ENCODE measurements at regions of chr7 and their contacts with region 1.

Region 1: DNA sequence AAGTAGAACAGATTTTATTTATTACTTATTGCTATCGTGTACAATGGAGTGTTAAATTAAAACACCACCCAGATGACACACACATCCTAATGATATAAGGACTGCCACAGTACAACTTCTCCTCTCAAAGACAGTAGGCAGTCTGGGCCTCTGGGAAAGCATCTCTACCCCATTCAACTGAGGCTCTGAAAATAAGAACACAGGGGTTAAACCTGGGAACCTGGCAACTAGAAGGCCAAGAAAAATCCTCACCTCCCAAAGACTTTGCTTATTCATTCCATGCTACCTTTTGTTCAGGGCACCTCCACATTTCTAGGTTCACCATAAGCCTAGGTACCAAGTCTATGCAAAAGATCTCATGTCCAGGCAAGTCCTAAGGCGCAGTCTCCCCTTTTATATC is 125.4 kb upstream of the FEZF1 start:
- DNase-seq: no peak
- ATAC-seq: no peak
- H3K4me3 ChIP-seq: no peak overlapping the region
- H3K27ac ChIP-seq: no peak overlapping the region
- H3K4me1 ChIP-seq: no peaks in the 10 kb centered on the region
- H3K27me3 ChIP-seq: no peaks in the 10 kb centered on the region
- CTCF ChIP-seq: no peak

Region 2: GRCh38 chr7:122038904-122039303 is 391.0 kb before region 1 on chr7:
- CTCF ChIA-PET with region 1: no interaction called
- POLR2A ChIA-PET with region 1: no interaction called
- in situ Hi-C with region 1: no loop called
- intact Hi-C with region 1: no loop called
- DNase-seq: no peak
- ATAC-seq: no peak
- H3K4me3 ChIP-seq: no peak overlapping the region
- H3K27ac ChIP-seq: no peak overlapping the region
- H3K4me1 ChIP-seq: no peaks in the 10 kb centered on the region
- H3K27me3 ChIP-seq: no peaks in the 10 kb centered on the region
- CTCF ChIP-seq: no peak

Region 3: DNA sequence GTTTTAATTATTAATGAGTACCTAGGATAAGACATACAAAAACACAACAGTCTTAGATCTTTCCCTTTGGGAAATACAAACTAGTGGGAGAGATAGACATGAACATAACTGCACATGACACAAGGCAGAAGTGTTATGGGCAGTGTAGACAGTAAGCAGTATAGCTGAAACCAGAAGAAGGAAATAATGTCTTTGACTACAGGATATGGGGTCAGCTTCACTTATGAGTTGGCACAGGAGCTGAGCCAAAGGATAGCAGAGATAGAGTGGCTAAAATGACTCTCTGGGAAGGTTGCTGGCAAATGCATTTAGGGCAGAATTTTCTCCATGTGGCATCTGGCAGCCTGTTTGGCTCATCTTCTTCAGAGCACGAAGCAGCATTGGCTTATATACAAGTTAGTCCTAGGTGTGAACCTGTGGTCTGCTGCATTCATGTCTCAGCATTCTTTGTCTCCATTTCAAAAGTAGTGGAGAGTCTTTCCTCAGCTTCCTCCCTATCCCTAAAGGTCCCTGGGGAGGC is 65.1 kb before region 1 on chr7:
- CTCF ChIA-PET with region 1: interaction called, 14 read pairs
- POLR2A ChIA-PET with region 1: no interaction called
- in situ Hi-C with region 1: no loop called
- intact Hi-C with region 1: no loop called
- DNase-seq: no peak
- ATAC-seq: no peak
- H3K4me3 ChIP-seq: no peak overlapping the region
- H3K27ac ChIP-seq: no peak overlapping the region
- H3K4me1 ChIP-seq: no peaks in the 10 kb centered on the region
- H3K27me3 ChIP-seq: no peaks in the 10 kb centered on the region
- CTCF ChIP-seq: no peak

Region 4: DNA sequence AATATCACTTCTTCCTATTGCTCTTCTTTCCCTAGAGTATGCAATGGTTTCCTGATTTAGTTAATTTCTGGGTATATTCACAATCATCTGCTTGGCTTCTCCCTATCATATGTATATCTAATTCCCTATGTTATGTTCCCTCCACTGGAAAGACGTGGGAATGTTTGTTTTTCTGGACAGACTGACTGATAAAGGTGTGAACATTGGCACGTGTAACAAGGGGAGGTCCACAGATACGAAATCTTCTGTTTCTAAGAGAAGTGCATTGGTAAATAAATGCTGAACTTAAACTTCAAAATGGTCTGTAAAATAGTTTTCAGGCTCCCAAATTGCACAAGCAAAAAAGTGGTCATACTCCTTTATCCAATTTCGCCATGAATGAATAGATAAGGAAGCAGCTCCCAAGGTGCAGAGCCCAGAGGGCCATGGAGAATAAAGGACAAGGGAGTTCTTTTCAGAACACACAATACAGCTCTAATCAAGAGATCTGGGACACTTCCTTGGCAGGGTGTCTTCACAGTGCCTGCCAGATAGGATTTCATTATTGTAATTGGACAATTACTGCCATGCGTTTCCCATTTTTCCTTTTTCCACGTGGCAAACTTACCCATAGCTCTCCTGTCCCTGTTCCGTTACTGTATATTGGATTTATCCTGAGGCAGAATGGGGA is 127.1 kb after region 1 on chr7:
- CTCF ChIA-PET with region 1: no interaction called
- POLR2A ChIA-PET with region 1: no interaction called
- in situ Hi-C with region 1: no loop called
- intact Hi-C with region 1: no loop called
- DNase-seq: no peak
- ATAC-seq: no peak
- H3K4me3 ChIP-seq: no peak overlapping the region
- H3K27ac ChIP-seq: no peak overlapping the region
- H3K4me1 ChIP-seq: no peaks in the 10 kb centered on the region
- H3K27me3 ChIP-seq: no peaks in the 10 kb centered on the region
- CTCF ChIP-seq: no peak

Measured in Panc1 (cell line).